CD4-positive, alpha-beta T cell (primary cell): ENCODE measurements at regions of chr3 and their contacts with region 1.

Region 1: DNA sequence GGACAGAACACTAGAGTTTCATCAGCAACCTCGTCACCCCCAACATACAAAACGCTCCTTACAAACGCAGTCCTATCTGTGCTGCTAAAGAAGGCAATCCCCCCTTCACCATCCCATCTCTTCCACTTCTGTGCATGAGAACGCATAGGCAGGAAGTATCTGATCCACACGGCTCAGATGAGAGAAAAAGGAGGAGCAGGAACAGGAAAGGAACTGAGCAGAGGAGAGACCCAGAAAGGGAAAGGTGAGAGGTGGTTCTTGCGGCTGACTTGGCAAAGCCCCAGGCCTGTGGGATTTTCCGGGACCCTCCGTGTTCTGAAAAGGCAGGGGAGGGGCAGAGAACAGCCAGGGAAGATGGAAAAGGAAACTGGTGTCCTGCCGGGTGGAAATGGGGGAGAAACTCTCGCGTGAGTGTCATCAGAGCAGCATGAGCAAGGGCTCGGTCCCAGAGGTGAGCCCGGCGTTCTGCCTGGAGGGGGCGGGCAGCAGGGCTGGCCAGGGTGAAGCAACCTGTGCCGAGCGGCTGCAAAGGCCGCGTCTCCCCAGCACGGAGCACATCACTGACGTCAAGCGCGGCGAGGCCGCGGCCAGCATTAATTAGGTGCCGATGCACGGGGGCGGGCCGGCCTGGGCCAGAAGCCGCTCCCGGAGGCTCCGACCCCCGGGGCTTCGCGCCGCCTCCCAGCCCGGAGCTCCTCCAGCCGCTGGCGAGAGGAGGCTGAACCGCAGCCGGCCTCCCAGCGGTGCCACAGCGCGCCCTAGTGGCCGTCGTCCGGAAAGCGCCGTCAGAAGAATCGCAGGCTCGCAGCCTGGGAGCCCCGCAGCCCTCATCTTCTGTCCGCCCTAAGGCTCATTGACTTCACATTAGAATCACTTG is 35.8 kb downstream of the CPN2 start:
- DNase-seq: peak; percentile 59 to 90 (median 80)
- ATAC-seq: peak; percentile 92
- H3K4me3 ChIP-seq: peak overlapping the region; percentile 56
- H3K4me3 Mint-ChIP-seq: peak overlapping the region; percentile 75
- H3K27ac ChIP-seq: no peak overlapping the region
- H3K27ac Mint-ChIP-seq: no peak overlapping the region
- H3K4me1 ChIP-seq: peaks cover 15% of the 10 kb centered on the region
- H3K4me1 Mint-ChIP-seq: peaks cover 17% of the 10 kb centered on the region
- H3K27me3 ChIP-seq: peaks cover 16 to 20% of the 10 kb centered on the region in 2 experiments
- H3K27me3 Mint-ChIP-seq: peaks cover 35% of the 10 kb centered on the region
- CTCF ChIP-seq: peak; percentile 95

Region 2: GRCh38 chr3:192566706-192567290 is 1748.5 kb before region 1 on chr3:
- CTCF ChIA-PET with region 1: no interaction called
- POLR2A ChIA-PET with region 1: no interaction called
- intact Hi-C with region 1: loop called in 1 of 2 experiments (anchors 5 kb)
- DNase-seq: peak; percentile 17 to 68 (median 41)
- ATAC-seq: no peak
- H3K4me3 ChIP-seq: no peak overlapping the region
- H3K4me3 Mint-ChIP-seq: no peak overlapping the region
- H3K27ac ChIP-seq: no peak overlapping the region
- H3K27ac Mint-ChIP-seq: no peak overlapping the region
- H3K4me1 ChIP-seq: peaks cover 2% of the 10 kb centered on the region
- H3K4me1 Mint-ChIP-seq: no peaks in the 10 kb centered on the region
- H3K27me3 ChIP-seq: peaks cover 0 to 12% of the 10 kb centered on the region in 2 experiments
- H3K27me3 Mint-ChIP-seq: peaks cover 30% of the 10 kb centered on the region
- CTCF ChIP-seq: peak; percentile 46

Region 3: DNA sequence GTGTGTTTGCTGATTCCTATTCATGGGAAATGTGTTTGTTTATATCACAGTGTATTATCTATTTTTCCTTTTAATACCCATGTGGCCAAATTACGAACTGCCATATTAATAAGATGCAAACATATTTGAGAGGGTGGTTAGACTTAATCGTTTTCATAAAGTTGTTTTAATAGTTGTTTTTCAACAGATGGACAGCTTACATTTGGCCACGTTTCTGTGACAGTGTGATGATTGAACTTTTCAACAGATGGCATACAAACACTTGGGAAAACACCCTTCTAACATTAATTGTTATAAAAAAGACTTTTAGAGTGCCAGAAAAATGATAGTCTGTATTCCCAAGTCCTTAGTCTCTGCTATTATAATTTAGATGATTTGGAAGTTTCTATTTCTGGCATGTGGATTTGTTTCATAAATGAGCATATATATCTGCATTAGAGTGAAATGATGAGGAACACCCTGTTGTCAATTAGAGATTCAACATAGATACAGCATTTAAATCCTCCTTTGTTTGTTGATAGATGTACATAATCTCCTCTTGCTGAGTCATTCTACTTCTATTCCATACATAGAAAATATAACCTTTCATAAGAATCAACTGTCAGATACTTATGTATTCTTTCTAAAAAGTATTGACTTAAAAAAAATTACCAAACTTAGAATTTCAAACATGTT is 1061.2 kb before region 1 on chr3:
- CTCF ChIA-PET with region 1: no interaction called
- POLR2A ChIA-PET with region 1: no interaction called
- intact Hi-C with region 1: no loop called
- DNase-seq: no peak
- ATAC-seq: no peak
- H3K4me3 ChIP-seq: no peak overlapping the region
- H3K4me3 Mint-ChIP-seq: no peak overlapping the region
- H3K27ac ChIP-seq: no peak overlapping the region
- H3K27ac Mint-ChIP-seq: no peak overlapping the region
- H3K4me1 ChIP-seq: no peaks in the 10 kb centered on the region
- H3K4me1 Mint-ChIP-seq: no peaks in the 10 kb centered on the region
- H3K27me3 ChIP-seq: peaks cover 0 to 7% of the 10 kb centered on the region in 2 experiments
- H3K27me3 Mint-ChIP-seq: peaks cover 33% of the 10 kb centered on the region
- CTCF ChIP-seq: no peak

Region 4: GRCh38 chr3:193465992-193466608 is 849.2 kb before region 1 on chr3:
- CTCF ChIA-PET with region 1: no interaction called
- POLR2A ChIA-PET with region 1: no interaction called
- intact Hi-C with region 1: loop called (anchors 2 to 5 kb)
- DNase-seq: no peak
- ATAC-seq: no peak
- H3K4me3 ChIP-seq: no peak overlapping the region
- H3K4me3 Mint-ChIP-seq: no peak overlapping the region
- H3K27ac ChIP-seq: no peak overlapping the region
- H3K27ac Mint-ChIP-seq: no peak overlapping the region
- H3K4me1 ChIP-seq: no peaks in the 10 kb centered on the region
- H3K4me1 Mint-ChIP-seq: no peaks in the 10 kb centered on the region
- H3K27me3 ChIP-seq: no peaks in the 10 kb centered on the region
- H3K27me3 Mint-ChIP-seq: no peaks in the 10 kb centered on the region
- CTCF ChIP-seq: no peak

Region 5: GRCh38 chr3:193780810-193781472 is 534.4 kb before region 1 on chr3:
- CTCF ChIA-PET with region 1: interaction called, 13 read pairs
- POLR2A ChIA-PET with region 1: interaction called, 4 read pairs
- intact Hi-C with region 1: loop called (anchors 1 kb)
- DNase-seq: peak in 8 of 14 experiments; percentile 7 to 53 (median 16)
- ATAC-seq: no peak
- H3K4me3 ChIP-seq: no peak overlapping the region
- H3K4me3 Mint-ChIP-seq: no peak overlapping the region
- H3K27ac ChIP-seq: no peak overlapping the region
- H3K27ac Mint-ChIP-seq: no peak overlapping the region
- H3K4me1 ChIP-seq: no peaks in the 10 kb centered on the region
- H3K4me1 Mint-ChIP-seq: peaks cover 9% of the 10 kb centered on the region
- H3K27me3 ChIP-seq: peaks cover 19 to 24% of the 10 kb centered on the region in 2 experiments
- H3K27me3 Mint-ChIP-seq: peaks cover 42% of the 10 kb centered on the region
- CTCF ChIP-seq: peak; percentile 49

Region 6: DNA sequence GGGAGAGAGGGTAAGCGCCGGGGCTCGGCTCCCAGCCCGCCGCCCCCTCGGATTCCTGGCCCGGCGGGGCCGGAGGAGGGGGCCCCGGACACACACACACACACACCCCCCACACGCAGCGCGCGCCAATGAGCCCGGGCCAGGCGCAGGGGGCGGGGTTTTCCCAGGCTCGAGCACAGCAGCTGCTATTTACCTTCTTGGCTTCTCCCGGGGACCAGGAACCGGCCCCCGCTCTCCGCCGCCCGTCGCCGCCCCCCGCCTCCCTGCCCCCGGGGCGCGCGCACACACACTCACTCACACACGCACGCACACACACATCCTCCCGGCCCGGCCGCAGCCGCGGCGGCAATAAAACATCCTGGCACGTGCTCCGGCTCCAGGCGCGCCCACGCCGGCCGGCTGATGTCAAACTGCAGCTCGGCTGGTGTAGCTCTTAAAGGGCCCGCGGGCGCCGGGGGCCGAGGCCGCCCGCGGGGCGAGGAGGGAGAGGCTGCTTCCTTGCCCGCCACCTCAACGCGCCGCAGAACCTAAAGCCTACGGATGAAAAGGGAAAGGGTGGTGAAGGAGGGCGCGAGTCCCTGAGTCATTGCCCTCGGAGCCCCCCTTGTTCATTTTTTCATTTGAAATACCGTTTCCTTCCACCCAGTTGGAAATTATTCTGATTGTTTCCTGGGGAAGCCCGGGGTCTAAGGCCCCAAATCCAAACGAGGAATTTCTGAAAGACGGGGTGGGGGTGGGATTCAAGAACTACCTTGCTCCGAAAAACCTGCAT is 180.4 kb before region 1 on chr3:
- CTCF ChIA-PET with region 1: interaction called, 13 read pairs
- POLR2A ChIA-PET with region 1: no interaction called
- intact Hi-C with region 1: loop called in 1 of 2 experiments (anchors 5 kb)
- DNase-seq: peak; percentile 61 to 92 (median 76)
- ATAC-seq: peak; percentile 65
- H3K4me3 ChIP-seq: peak overlapping the region; percentile 52
- H3K4me3 Mint-ChIP-seq: peak overlapping the region; percentile 91
- H3K27ac ChIP-seq: peak overlapping the region in 1 of 2 donors; percentile 26
- H3K27ac Mint-ChIP-seq: peak overlapping the region; percentile 88
- H3K4me1 ChIP-seq: peaks cover 54% of the 10 kb centered on the region
- H3K4me1 Mint-ChIP-seq: peaks cover 60% of the 10 kb centered on the region
- H3K27me3 ChIP-seq: peaks cover 59 to 61% of the 10 kb centered on the region in 2 experiments
- H3K27me3 Mint-ChIP-seq: peaks cover 57% of the 10 kb centered on the region
- CTCF ChIP-seq: no peak

Region 7: DNA sequence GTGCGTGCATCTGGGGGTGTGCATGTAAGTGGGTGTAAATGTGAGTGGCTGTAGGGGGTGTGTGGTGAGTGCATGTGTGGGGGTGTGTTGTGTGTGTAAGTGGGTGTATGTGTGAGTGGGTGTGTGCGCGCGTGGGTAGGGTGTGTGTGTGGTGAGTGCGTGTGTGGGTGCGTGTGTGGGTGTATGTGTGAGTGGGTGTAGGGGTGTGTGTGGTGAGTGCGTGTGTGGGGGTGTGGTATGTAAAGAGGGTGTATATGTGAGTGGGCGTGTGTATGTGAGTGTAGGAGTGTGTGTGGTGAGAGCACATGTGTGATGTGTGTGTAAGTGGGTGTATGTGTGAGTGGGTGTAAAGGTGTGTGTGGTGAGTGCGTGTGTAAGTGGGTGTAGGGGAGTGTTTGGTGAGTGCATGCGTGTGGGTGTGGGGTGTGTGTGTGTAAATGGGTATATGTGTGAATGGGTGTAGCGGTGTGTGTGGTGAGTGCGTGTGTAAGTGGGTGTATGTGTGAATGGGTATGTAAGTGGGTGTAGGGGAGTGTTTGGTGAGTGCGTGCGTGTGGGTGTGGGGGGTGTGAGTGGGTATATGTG is 36.7 kb after region 1 on chr3:
- CTCF ChIA-PET with region 1: no interaction called
- POLR2A ChIA-PET with region 1: no interaction called
- intact Hi-C with region 1: no loop called
- DNase-seq: no peak
- ATAC-seq: no peak
- H3K4me3 ChIP-seq: no peak overlapping the region
- H3K4me3 Mint-ChIP-seq: no peak overlapping the region
- H3K27ac ChIP-seq: no peak overlapping the region
- H3K27ac Mint-ChIP-seq: no peak overlapping the region
- H3K4me1 ChIP-seq: no peaks in the 10 kb centered on the region
- H3K4me1 Mint-ChIP-seq: no peaks in the 10 kb centered on the region
- H3K27me3 ChIP-seq: no peaks in the 10 kb centered on the region
- H3K27me3 Mint-ChIP-seq: no peaks in the 10 kb centered on the region
- CTCF ChIP-seq: no peak